ENCODE measurements at regions of chr12 and their contacts with region 1.

Region 1: GRCh38 chr12:22377731-22378496 is 43.4 kb upstream of the ST8SIA1 start:
- DNase-seq: no peak
- ATAC-seq: no peak
- H3K4me3 ChIP-seq: no peak overlapping the region
- H3K27ac ChIP-seq: no peak overlapping the region
- H3K4me1 ChIP-seq: peaks cover 0 to 8% (median 0%) of the 10 kb centered on the region in 12 donors
- H3K27me3 ChIP-seq: no peaks in the 10 kb centered on the region
- CTCF ChIP-seq: no peak
- POLR2A ChIP-seq: no peak

Region 2: DNA sequence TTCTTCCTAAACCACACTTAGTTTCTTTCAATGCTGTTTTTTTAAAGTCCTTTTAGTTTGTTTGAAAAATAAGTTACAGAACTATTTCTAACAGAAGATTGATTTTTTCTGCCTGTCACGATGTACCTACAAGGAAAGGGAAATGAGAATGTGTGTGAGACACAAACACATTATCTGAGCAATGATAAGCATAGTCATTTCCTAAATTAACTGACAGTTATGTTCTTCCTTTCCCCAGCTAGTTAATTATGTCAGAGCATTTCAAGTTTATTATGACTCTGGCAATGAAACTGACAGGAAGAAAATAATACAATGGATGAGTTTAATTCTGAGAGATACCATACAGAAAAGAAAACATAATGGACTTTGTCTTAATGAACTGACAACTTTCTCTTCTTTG is 699.0 kb before region 1 on chr12:
- intact Hi-C with region 1: no loop called
- DNase-seq: no peak
- ATAC-seq: no peak
- H3K4me3 ChIP-seq: no peak overlapping the region
- H3K27ac ChIP-seq: no peak overlapping the region
- H3K4me1 ChIP-seq: peaks cover 0 to 16% (median 0%) of the 10 kb centered on the region in 12 donors
- H3K27me3 ChIP-seq: no peaks in the 10 kb centered on the region
- CTCF ChIP-seq: no peak
- POLR2A ChIP-seq: no peak

Region 3: DNA sequence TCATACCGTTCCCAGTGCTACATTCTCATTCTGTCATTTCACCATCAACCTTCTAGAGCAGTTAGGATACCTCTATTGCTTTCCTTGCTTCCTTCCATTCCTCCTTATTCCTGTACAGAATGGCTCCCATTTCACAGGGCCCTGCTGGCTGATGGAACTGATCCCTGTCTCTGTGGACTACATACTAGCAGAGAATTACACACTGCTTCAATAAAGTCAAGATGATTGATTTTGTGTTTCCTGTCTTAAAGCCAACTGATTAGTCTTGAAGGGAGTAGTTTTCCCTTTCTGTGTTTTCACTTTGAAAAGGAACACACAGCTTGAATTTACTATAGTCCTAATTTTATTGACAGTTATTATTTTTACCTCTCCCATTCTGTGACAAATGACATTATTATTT is 173.5 kb before region 1 on chr12:
- intact Hi-C with region 1: loop called in 1 of 10 experiments (anchors 10 kb)
- DNase-seq: no peak
- ATAC-seq: no peak
- H3K4me3 ChIP-seq: no peak overlapping the region
- H3K27ac ChIP-seq: no peak overlapping the region
- H3K4me1 ChIP-seq: no peaks in the 10 kb centered on the region
- H3K27me3 ChIP-seq: no peaks in the 10 kb centered on the region
- CTCF ChIP-seq: no peak
- POLR2A ChIP-seq: no peak

Region 4: DNA sequence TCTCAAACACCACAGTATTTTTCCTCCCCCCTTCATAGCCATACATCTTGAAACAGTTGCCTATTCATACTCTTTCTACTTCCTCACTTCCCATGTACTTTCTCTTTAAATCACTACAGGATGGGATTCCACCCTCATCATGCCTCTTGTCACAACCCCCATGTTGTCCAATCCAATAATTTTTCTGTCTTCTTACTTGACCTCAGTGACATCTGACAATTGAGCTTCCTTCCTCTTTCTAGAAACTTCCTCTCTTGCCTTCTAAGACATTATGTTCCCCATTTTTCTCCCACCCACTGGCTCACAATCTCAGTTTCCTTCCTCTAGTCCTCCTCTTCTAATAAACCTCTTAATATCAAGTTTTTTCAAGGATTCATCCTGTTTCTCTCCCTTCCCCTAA is 161.1 kb after region 1 on chr12:
- intact Hi-C with region 1: no loop called
- DNase-seq: no peak
- ATAC-seq: peak in 3 of 4 donors; percentile 7 to 58 (median 31)
- H3K4me3 ChIP-seq: peak overlapping the region in 1 of 12 donors; percentile 21
- H3K27ac ChIP-seq: peak overlapping the region in 6 of 12 donors; percentile 8 to 86 (median 26)
- H3K4me1 ChIP-seq: peaks cover 0 to 91% (median 31%) of the 10 kb centered on the region in 12 donors
- H3K27me3 ChIP-seq: no peaks in the 10 kb centered on the region
- CTCF ChIP-seq: no peak
- POLR2A ChIP-seq: no peak